Prostate gland (tissue), 2 donors: ENCODE measurements at regions of chr3 and their contacts with region 1.

Region 1: DNA sequence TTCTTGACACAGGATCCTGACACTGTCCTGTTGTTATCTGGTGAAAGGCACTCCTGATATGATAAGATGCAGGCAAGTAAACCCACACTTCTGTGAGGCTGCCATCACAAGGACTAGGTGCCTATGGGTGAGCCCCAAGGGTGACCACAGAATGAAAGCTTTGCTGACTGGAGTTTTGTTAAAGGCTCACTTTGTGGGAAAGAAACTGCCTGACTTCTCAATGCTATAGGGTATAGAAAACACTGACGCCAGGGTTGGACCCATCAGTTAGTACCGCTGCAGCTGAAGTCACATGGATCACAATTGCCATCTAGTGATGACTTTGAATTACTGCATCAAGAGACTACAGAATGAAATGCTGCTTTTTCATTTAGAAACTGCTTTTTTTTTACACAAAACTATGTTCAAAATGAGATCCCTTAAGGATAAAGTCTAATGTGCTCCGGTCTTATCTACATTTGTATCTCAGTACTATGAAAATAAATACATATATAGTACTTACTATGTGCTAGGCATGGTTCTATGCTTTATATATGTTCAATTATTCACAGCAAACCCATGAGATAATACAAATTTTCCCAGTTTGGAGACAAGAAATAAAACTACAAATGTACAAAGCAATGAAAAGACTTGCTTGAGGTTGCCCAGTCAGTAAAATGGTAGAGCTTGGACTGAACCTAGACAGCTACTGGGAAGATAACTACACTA is 64.2 kb upstream of the CMSS1 start:
- DNase-seq: no peak
- H3K4me3 ChIP-seq: no peak overlapping the region
- H3K27ac ChIP-seq: no peak overlapping the region
- H3K4me1 ChIP-seq: no peaks in the 10 kb centered on the region
- H3K27me3 ChIP-seq: no peaks in the 10 kb centered on the region
- CTCF ChIP-seq: peak; percentile 21 to 63 (median 48)
- POLR2A ChIP-seq: no peak

Region 2: DNA sequence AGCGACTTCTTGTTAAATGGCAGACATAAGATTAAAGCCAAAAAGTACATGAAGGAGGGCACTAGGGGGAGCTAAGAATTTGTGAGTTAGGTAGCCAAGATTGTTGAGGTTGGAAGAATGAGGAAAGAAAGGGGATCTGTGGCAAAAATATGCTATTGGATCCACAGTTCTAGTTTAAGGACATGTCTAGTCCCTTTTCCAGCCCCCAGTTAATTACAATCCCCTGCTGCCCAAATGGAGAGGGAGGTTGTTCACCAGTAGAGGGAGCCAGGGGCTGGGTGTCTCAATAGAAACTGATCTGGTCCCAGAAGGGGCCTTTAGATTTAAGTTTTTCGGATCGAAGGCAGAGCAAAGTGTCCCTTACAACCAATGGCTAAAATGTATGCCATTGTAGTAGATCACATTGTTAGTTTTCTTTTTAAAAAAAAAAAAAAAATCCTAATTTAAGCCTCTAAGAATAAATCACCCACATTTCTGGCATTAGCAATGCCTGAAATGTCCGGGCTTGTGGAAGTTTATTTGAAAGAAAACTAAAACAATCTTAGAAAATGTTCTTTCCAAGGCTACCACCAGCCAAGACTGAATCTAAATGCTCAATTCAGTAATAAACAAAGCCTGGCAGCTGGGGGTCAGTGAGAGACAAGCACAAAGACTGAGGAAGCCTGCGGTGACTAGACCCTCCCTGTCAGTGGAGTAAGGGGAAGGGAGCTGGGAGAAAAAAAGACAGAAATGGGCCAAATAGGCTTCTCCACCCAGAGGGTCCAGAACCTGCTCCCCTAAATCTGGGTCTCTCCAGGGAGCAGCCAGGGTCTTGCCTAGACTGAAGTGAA is 107.9 kb before region 1 on chr3:
- intact Hi-C with region 1: loop called (anchors 5 kb)
- DNase-seq: no peak
- H3K4me3 ChIP-seq: no peak overlapping the region
- H3K27ac ChIP-seq: peak overlapping the region; percentile 5 to 43
- H3K4me1 ChIP-seq: no peaks in the 10 kb centered on the region
- H3K27me3 ChIP-seq: no peaks in the 10 kb centered on the region
- CTCF ChIP-seq: peak in 3 of 4 experiments; percentile 20 to 34 (median 32)
- POLR2A ChIP-seq: no peak